Lower leg skin (tissue), 4 donors: ENCODE measurements at regions of chr19 and their contacts with region 1.

Region 1: GRCh38 chr19:49243129-49243528 is 81.9 kb downstream of the SLC6A16 start:
- DNase-seq: peak in 1 of 2 donors; percentile 29
- H3K4me3 ChIP-seq: no peak overlapping the region
- CTCF ChIP-seq: no peak
- POLR2A ChIP-seq: no peak

Region 2: GRCh38 chr19:49327878-49328544 is 84.9 kb after region 1 on chr19:
- intact Hi-C with region 1: loop called (anchors 10 kb)
- DNase-seq: no peak
- H3K4me3 ChIP-seq: no peak overlapping the region
- CTCF ChIP-seq: no peak
- POLR2A ChIP-seq: no peak